Activated CD4-positive, alpha-beta T cell treated with anti-CD3 and anti-CD28 coated beads for 36 hours (primary cell): ENCODE measurements at regions of chr2 and their contacts with region 1.

Region 1: DNA sequence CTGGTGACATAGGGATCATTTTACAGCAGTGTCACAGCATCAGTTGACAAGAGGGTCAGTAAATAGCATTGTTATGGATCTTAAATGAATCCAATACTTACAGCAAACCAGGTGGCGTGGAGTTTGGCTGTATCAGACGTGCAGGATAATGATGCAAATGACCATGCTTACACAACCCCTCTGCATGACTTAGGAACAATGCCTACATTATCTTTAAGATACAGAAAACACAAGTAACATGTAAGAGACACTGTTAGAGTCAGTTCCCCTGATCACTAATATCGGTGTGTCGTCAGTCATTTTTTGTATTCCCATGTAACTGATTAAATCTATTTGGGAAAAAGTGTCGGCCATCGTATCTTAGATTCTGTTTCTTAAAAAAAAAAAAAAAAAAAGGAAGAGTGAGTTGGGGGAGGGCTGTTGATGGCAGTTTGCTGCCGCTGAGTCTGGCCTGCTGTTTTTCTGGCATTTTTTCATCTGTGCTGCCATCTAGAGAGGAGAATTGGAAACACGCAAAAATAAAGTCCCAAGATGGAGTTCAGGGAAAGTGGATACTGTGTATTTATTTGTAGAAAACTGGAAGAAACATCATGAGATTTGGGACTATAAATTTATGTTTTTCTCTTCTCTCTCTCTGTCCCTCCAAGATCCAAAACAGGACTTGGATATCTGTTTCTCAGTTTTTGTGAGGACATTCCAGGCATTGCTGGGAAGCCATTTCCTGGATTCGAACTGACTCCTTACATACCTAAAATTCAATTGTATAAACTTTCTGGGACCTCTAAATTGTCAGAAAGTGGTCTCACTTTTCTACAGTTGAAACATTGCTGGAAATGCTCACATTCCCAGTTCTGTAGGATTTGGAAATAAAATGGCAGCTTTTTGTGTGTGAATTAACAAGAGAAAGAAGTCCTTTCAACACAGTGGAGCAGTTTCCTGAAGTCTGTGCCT is 60.3 kb upstream of the AGPS start:
- DNase-seq: peak; percentile 59
- ATAC-seq: peak; percentile 90
- H3K4me3 Mint-ChIP-seq: no peak overlapping the region
- H3K27ac Mint-ChIP-seq: no peak overlapping the region
- H3K4me1 Mint-ChIP-seq: peaks cover 17% of the 10 kb centered on the region
- H3K27me3 Mint-ChIP-seq: no peaks in the 10 kb centered on the region

Region 2: GRCh38 chr2:177212106-177212890 is 120.0 kb before region 1 on chr2 and contains the start of gene HNRNPA3:
- CTCF ChIA-PET with region 1: no interaction called
- POLR2A ChIA-PET with region 1: no interaction called
- intact Hi-C with region 1: loop called in 1 of 2 experiments (anchors 5 kb)
- DNase-seq: peak; percentile 100
- ATAC-seq: peak; percentile 90
- H3K4me3 Mint-ChIP-seq: peak within 1 kb of the TSS; percentile 86
- H3K27ac Mint-ChIP-seq: peak within 1 kb of the TSS; percentile 99
- H3K4me1 Mint-ChIP-seq: peaks cover 42% of the 10 kb centered on the region
- H3K27me3 Mint-ChIP-seq: no peaks in the 10 kb centered on the region
- total RNA-seq, gene HNRNPA3: 200 to 290 TPM

Region 3: GRCh38 chr2:177281400-177282180 is 50.7 kb before region 1 on chr2:
- CTCF ChIA-PET with region 1: no interaction called
- POLR2A ChIA-PET with region 1: no interaction called
- intact Hi-C with region 1: no loop called
- DNase-seq: no peak
- ATAC-seq: no peak
- H3K4me3 Mint-ChIP-seq: no peak overlapping the region
- H3K27ac Mint-ChIP-seq: no peak overlapping the region
- H3K4me1 Mint-ChIP-seq: peaks cover 9% of the 10 kb centered on the region
- H3K27me3 Mint-ChIP-seq: no peaks in the 10 kb centered on the region

Region 4: DNA sequence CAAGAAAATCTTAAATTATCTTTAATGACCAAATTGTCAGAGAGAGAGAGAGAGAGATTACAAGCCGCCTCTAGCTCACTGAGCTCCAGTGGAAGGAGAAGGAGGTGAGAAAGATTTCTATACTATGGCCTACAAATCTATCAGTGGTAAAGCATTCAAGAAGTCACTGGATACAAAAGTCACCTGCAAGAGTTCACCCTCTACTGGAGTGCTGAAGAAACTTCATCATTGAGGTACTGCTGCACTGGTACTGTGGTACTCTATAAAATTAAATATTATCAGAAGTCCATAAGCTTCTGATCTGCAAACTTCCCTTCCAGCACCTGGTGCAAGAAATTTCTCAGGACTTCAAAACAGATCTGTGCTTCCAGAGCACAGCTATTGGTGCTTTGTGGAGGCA is 12.0 kb after region 1 on chr2:
- CTCF ChIA-PET with region 1: interaction called, 10 read pairs
- POLR2A ChIA-PET with region 1: no interaction called
- intact Hi-C with region 1: no loop called
- DNase-seq: no peak
- ATAC-seq: no peak
- H3K4me3 Mint-ChIP-seq: no peak overlapping the region
- H3K27ac Mint-ChIP-seq: no peak overlapping the region
- H3K4me1 Mint-ChIP-seq: no peaks in the 10 kb centered on the region
- H3K27me3 Mint-ChIP-seq: no peaks in the 10 kb centered on the region

Region 5: GRCh38 chr2:177552422-177553175 is 220.3 kb after region 1 on chr2:
- CTCF ChIA-PET with region 1: interaction called, 3 read pairs
- POLR2A ChIA-PET with region 1: no interaction called
- intact Hi-C with region 1: loop called in 1 of 2 experiments (anchors 2 kb)
- DNase-seq: peak; percentile 92
- ATAC-seq: peak; percentile 96
- H3K4me3 Mint-ChIP-seq: peak overlapping the region; percentile 90
- H3K27ac Mint-ChIP-seq: peak overlapping the region; percentile 99
- H3K4me1 Mint-ChIP-seq: peaks cover 6% of the 10 kb centered on the region
- H3K27me3 Mint-ChIP-seq: no peaks in the 10 kb centered on the region

Region 6: GRCh38 chr2:177618255-177619253 is 286.2 kb after region 1 on chr2:
- CTCF ChIA-PET with region 1: no interaction called
- POLR2A ChIA-PET with region 1: no interaction called
- intact Hi-C with region 1: loop called (anchors 5 kb)
- DNase-seq: peak; percentile 95
- ATAC-seq: peak; percentile 95
- H3K4me3 Mint-ChIP-seq: peak overlapping the region; percentile 90
- H3K27ac Mint-ChIP-seq: peak overlapping the region; percentile 98
- H3K4me1 Mint-ChIP-seq: no peaks in the 10 kb centered on the region
- H3K27me3 Mint-ChIP-seq: no peaks in the 10 kb centered on the region

Region 7: GRCh38 chr2:177763532-177764265 is 431.4 kb after region 1 on chr2:
- CTCF ChIA-PET with region 1: interaction called, 12 read pairs
- POLR2A ChIA-PET with region 1: no interaction called
- intact Hi-C with region 1: loop called (anchors 1 kb)
- DNase-seq: peak; percentile 90
- ATAC-seq: peak; percentile 99
- H3K4me3 Mint-ChIP-seq: no peak overlapping the region
- H3K27ac Mint-ChIP-seq: no peak overlapping the region
- H3K4me1 Mint-ChIP-seq: peaks cover 3% of the 10 kb centered on the region
- H3K27me3 Mint-ChIP-seq: peaks cover 11% of the 10 kb centered on the region